Esophagus squamous epithelium (tissue), 5 donors: ENCODE measurements at regions of chr5 and their contacts with region 1.

Region 1: GRCh38 chr5:59799668-59800346 is 93.7 kb downstream of the PDE4D start:
- DNase-seq: no peak
- H3K4me3 ChIP-seq: peak overlapping the region; percentile 10 to 48 (median 30)
- H3K27ac ChIP-seq: peak overlapping the region; percentile 65 to 89 (median 81)
- H3K4me1 ChIP-seq: peaks cover 0 to 30% (median 9%) of the 10 kb centered on the region in 3 donors
- H3K27me3 ChIP-seq: no peaks in the 10 kb centered on the region
- CTCF ChIP-seq: peak; percentile 43 to 91 (median 80)
- POLR2A ChIP-seq: no peak

Region 2: DNA sequence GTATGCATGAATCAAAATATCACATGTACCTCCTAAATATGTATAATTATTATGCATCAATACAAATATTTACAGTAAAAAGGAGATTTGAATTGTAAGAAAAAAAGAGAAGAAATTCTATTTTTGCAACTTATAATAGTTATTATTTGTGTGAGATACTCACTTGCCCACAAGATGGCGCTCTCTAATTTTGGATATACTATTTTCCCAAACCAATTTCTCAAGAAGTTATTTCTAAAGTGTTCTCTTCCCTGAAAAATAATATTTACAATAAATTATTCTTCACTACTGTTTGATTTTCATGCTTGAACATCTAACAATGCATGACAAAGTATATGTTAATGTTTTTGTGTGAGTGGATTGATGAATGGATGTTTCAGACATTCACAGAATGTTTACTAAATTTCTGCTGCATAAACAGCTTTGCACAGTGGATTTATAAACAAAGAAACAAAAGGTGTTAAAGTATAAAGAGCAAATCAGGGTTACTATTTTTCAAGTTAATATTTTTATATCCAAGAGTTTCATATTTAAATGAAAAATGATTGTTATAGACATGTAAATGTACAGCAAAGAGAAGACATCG is 409.6 kb before region 1 on chr5:
- intact Hi-C with region 1: loop called (anchors 5 kb)
- DNase-seq: no peak
- H3K4me3 ChIP-seq: no peak overlapping the region
- H3K27ac ChIP-seq: no peak overlapping the region
- H3K4me1 ChIP-seq: no peaks in the 10 kb centered on the region
- H3K27me3 ChIP-seq: no peaks in the 10 kb centered on the region
- CTCF ChIP-seq: peak in 5 of 6 experiments; percentile 43 to 70 (median 64)
- POLR2A ChIP-seq: no peak

Region 3: GRCh38 chr5:59460368-59461153 is 339.2 kb before region 1 on chr5:
- intact Hi-C with region 1: no loop called
- DNase-seq: no peak
- H3K4me3 ChIP-seq: no peak overlapping the region
- H3K27ac ChIP-seq: no peak overlapping the region
- H3K4me1 ChIP-seq: no peaks in the 10 kb centered on the region
- H3K27me3 ChIP-seq: no peaks in the 10 kb centered on the region
- CTCF ChIP-seq: no peak
- POLR2A ChIP-seq: no peak

Region 4: GRCh38 chr5:59506285-59506877 is 293.4 kb before region 1 on chr5:
- intact Hi-C with region 1: loop called (anchors 10 kb)
- DNase-seq: no peak
- H3K4me3 ChIP-seq: no peak overlapping the region
- H3K27ac ChIP-seq: no peak overlapping the region
- H3K4me1 ChIP-seq: no peaks in the 10 kb centered on the region
- H3K27me3 ChIP-seq: no peaks in the 10 kb centered on the region
- CTCF ChIP-seq: peak in 5 of 6 experiments; percentile 27 to 69 (median 41)
- POLR2A ChIP-seq: no peak

Region 5: GRCh38 chr5:59637878-59638580 is 161.8 kb before region 1 on chr5:
- intact Hi-C with region 1: no loop called
- DNase-seq: no peak
- H3K4me3 ChIP-seq: no peak overlapping the region
- H3K27ac ChIP-seq: no peak overlapping the region
- H3K4me1 ChIP-seq: no peaks in the 10 kb centered on the region
- H3K27me3 ChIP-seq: no peaks in the 10 kb centered on the region
- CTCF ChIP-seq: no peak
- POLR2A ChIP-seq: no peak